ENCODE measurements at regions of chr2 and their contacts with region 1.

Region 1: DNA sequence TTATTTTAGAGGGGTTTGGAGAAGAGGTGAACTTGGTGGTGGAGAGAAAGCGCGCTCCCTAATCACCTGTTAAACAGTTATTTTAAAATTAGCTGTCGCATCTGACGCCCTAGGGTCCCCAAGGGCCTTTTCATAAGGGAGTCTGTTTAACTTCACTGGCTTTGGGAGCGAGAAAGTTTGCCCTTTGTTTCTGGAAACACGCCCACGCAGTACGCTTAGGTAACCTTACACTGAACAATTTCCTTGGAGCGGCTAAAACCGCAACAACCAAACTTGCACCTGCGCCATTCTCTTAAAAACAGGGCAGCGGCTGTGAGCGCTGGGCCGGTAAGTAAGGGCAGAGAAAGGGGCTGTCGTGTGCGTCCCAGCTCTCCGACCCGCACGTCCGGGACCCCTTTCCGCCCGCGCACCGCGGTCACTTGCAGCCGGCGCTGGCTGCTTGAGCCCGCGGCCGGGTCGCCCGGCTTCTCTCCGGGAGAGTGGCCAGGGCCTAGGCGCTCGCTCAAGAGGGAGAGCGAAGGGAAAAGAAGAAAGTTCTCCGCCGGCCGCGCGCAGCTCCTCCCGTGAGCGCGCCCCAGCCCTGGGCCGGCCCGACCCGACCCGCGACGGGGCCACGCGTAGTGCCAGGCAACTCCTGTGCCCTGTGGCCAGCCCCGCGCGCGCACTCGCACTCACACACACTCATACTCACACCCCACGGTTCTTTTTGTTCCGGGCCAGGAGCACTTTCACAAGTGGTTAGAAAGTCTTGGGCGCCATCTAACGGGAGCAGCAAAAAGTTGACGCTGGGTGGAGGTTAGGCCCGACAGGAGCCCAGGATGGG is 19.2 kb downstream of the POU3F3 start:
- DNase-seq: peak in 1 of 2 experiments; percentile 88
- H3K4me3 ChIP-seq: peak overlapping the region; percentile 48 to 75 (median 56)
- H3K27ac ChIP-seq: no peak overlapping the region
- H3K4me1 ChIP-seq: peaks cover 0 to 13% (median 4%) of the 10 kb centered on the region in 4 experiments; a peak in 5 of 7 replicates
- H3K27me3 ChIP-seq: peaks cover 43 to 80% (median 67%) of the 10 kb centered on the region in 4 experiments
- CTCF ChIP-seq: peak; percentile 62 to 76 (median 70)
- EP300 ChIP-seq: no peak
- POLR2A ChIP-seq: no peak
- RAD21 ChIP-seq: peak; percentile 76 to 80

Region 2: GRCh38 chr2:104862058-104862941 is 10.8 kb before region 1 on chr2:
- CTCF ChIA-PET with region 1: interaction called, 25 read pairs
- POLR2A ChIA-PET with region 1: interaction called, 11 read pairs
- DNase-seq: peak in 1 of 2 experiments; percentile 85
- H3K4me3 ChIP-seq: peak overlapping the region; percentile 39 to 65 (median 49)
- H3K27ac ChIP-seq: no peak overlapping the region
- H3K4me1 ChIP-seq: peaks cover 10 to 37% (median 23%) of the 10 kb centered on the region in 4 experiments
- H3K27me3 ChIP-seq: peaks cover 73 to 100% (median 89%) of the 10 kb centered on the region in 4 experiments
- CTCF ChIP-seq: no peak
- EP300 ChIP-seq: no peak
- POLR2A ChIP-seq: no peak
- RAD21 ChIP-seq: no peak

Region 3: DNA sequence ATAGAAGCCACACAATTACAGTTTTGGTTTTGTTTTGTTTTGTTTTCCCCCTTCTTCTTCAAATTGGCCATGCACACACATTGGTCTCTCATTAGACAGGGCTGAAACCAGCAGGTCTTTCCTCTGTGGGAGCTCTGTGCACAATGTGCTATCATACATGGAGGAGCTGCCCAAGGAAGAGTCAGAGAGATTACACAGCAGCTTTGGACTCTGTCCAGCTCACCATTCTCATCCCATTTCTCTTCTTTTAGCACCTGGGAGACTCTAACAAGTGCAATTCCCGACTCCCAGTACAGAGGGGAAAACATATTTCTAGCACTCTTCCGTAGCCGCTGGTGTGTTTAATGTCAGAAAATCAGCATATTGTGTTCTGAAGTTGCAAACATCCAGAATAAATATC is 10.3 kb after region 1 on chr2:
- CTCF ChIA-PET with region 1: interaction called, 10 read pairs
- POLR2A ChIA-PET with region 1: interaction called, 3 read pairs
- DNase-seq: no peak
- H3K4me3 ChIP-seq: no peak overlapping the region
- H3K27ac ChIP-seq: no peak overlapping the region
- H3K4me1 ChIP-seq: peaks cover 0 to 4% (median 0%) of the 10 kb centered on the region in 4 experiments; a peak in 1 of 7 replicates
- H3K27me3 ChIP-seq: peaks cover 0 to 2% (median 0%) of the 10 kb centered on the region in 4 experiments; a peak in 2 of 7 replicates
- CTCF ChIP-seq: no peak
- EP300 ChIP-seq: no peak
- POLR2A ChIP-seq: no peak
- RAD21 ChIP-seq: no peak